HAP-1 (cell line): ENCODE measurements at regions of chr11 and their contacts with region 1.

Region 1: GRCh38 chr11:43282607-43283440 is 29.0 kb upstream of the API5 start:
- DNase-seq: peak; percentile 42 to 71
- H3K4me3 ChIP-seq: no peak overlapping the region; the same call in 1 of the 2 replicates
- H3K4me1 ChIP-seq: peaks cover 4% of the 10 kb centered on the region; the same call in 1 of the 2 replicates
- H3K27me3 ChIP-seq: peaks cover 18% of the 10 kb centered on the region

Region 2: DNA sequence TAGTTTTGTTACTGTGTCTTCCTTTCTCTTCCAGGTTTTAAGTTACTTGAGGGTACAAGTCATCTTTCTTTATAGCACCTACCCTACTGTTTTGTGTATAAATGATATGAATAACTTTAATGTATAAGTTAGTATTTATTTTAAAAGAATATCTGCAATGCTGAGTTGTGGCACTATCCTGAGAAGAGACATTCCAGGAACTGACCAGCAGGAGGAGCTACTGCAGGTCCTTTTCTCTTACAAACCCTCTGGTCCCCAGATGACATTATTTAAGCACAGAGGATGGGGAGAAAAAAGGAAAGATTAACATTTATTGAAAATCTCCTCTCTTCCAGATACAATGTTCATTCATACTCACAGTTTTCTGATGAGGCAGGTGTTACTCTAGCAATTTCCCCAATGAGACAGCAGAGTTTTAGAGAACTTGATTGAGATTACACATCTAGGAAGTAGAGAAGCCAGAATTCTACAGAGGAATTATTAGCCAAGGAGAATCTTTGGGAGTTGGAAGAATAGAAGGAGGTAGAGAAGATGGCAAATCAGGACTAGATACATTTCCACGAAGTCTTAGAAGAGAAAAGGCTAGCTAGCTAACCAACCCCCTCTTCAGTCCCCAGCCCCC is 512.3 kb before region 1 on chr11:
- in situ Hi-C with region 1: loop called (anchors 25 kb)
- DNase-seq: peak in 1 of 2 experiments; percentile 27
- H3K4me3 ChIP-seq: no peak overlapping the region
- H3K4me1 ChIP-seq: no peaks in the 10 kb centered on the region
- H3K27me3 ChIP-seq: no peaks in the 10 kb centered on the region

Region 3: GRCh38 chr11:43145653-43146052 is 137.2 kb before region 1 on chr11:
- in situ Hi-C with region 1: no loop called
- DNase-seq: no peak
- H3K4me3 ChIP-seq: no peak overlapping the region
- H3K4me1 ChIP-seq: no peaks in the 10 kb centered on the region
- H3K27me3 ChIP-seq: no peaks in the 10 kb centered on the region